Heart left ventricle (tissue), 16 donors: ENCODE measurements at regions of chr6 and their contacts with region 1.

Region 1: DNA sequence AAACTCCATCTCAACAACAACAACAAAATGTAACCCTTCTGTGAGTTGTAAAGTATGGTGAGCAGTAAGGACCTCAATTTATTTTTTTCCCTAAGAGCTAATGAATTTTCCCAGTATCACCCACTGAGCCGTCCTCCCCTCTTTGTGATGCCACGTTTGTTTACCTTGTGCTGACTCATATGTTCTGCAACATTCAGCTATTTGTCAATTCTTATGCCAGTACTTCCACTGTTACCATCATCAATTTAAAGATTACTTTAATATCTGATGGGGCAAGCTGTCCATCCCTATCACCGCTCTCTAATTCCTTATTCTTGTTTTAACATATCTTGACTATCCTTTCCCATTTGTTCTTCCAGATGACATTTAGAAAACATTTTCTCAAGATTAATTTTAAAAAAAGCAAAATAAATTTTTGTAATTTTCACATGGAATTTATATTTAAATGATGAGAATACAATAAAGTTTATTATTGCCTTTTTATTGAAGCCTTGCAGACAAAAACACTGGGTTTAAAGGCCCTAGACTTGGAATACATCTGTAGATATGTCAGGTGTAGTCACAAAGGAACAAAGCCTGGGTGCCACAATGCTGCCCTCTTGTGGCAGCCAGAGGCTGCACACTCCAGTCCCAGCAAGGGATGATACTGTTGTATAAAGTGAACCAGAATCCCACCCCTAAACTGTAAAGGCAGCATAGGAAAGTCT is 37.4 kb downstream of the MAK start:
- DNase-seq: peak; percentile 23 to 64 (median 41)
- ATAC-seq: peak; percentile 55 to 88 (median 80)
- H3K4me3 ChIP-seq: no peak overlapping the region
- H3K27ac ChIP-seq: no peak overlapping the region
- H3K4me1 ChIP-seq: no peaks in the 10 kb centered on the region
- H3K27me3 ChIP-seq: no peaks in the 10 kb centered on the region
- CTCF ChIP-seq: peak; percentile 92 to 99 (median 98)
- POLR2A ChIP-seq: no peak

Region 2: GRCh38 chr6:10478187-10479040 is 322.6 kb before region 1 on chr6:
- intact Hi-C with region 1: loop called (anchors 2 to 5 kb)
- DNase-seq: no peak
- ATAC-seq: no peak
- H3K4me3 ChIP-seq: no peak overlapping the region
- H3K27ac ChIP-seq: no peak overlapping the region
- H3K4me1 ChIP-seq: no peaks in the 10 kb centered on the region
- H3K27me3 ChIP-seq: no peaks in the 10 kb centered on the region
- CTCF ChIP-seq: peak; percentile 41 to 62 (median 58)
- POLR2A ChIP-seq: no peak

Region 3: DNA sequence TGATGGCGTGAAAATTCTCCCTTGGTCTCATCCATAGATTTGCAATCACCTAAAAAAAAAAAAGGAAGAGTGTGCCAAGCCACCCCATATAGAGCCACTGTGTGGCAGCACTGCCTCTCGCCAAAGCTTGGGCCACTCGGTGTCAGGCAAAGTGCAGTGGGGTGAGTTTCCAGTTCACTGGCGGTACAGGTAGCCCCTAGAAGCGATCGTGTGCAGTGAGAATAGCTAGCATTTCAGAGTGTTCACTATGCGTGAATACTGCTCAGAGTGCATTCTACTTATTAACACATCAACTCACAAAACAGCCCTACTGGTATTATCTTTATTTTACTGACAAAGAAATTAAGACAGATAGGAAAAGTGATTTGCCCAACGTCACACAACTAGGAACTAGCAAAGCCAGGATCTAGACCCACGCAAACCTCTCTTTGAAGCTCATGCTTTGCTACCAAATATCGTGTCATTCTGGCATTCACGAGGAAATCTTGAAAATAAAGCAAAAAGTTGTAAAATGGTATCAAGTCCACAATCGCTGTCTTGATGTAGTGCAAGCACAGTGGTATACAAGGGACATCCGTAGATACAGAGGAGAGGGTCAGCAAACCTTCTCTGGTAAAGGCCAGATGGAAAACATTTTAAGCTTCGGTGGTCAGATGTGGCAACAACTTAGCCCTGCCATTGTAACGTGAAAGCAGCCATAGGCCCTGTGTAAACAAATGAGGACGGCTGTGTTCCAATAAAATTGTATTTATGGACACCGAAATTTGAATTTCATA is 290.2 kb before region 1 on chr6:
- intact Hi-C with region 1: loop called in 2 of 10 experiments (anchors 2 to 10 kb)
- DNase-seq: peak; percentile 64 to 81 (median 75)
- ATAC-seq: peak; percentile 91 to 96 (median 92)
- H3K4me3 ChIP-seq: peak overlapping the region in 6 of 12 donors; percentile 7 to 29 (median 14)
- H3K27ac ChIP-seq: peak overlapping the region; percentile 64 to 95 (median 81)
- H3K4me1 ChIP-seq: peaks cover 0 to 16% (median 0%) of the 10 kb centered on the region in 12 donors
- H3K27me3 ChIP-seq: no peaks in the 10 kb centered on the region
- CTCF ChIP-seq: peak; percentile 49 to 75 (median 58)
- POLR2A ChIP-seq: peak in 1 of 2 donors; percentile 6

Region 4: DNA sequence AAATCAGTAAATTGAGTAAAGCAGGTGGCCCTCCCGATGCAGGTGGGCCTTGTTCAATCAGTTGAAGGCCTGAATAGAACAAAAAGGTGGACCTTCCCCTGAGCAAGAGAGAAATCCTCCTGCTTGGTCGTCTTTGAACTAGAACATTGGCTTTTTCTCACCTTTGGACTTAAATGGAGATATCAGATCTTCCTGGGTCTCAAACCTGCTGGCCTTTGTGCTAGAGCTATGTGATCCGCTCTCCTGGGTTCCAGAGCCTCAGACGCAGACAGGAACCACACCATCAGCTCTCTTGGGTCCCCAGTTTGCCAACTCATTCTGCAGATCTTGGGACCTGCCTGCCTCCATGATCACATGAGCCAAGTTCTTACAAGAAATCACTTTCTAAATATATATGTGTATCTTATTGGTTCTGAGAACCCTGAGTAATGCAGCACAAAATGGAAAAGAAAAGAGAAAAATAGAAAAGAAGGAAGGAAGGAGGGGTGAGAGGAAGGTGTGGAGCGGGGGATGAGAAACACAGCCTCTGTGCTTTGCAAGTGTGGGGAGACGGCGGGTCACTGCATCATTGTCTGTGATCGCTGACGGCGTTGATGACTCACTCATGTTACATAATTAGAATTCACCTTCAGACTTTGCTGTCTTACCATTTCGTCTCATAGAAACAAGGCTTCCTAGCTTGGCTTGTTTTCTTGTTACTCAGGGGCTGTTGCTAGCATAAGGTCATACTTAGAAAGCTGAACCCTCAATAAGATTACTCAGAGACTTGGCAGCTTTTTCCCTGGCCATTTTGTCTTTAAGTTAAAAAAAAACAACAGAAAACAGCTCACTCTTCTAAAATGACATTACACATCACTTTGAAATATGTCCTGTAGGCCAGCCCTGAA is 517.1 kb after region 1 on chr6:
- intact Hi-C with region 1: no loop called
- DNase-seq: peak in 4 of 5 donors; percentile 44 to 79 (median 62)
- ATAC-seq: peak; percentile 40 to 88 (median 76)
- H3K4me3 ChIP-seq: no peak overlapping the region
- H3K27ac ChIP-seq: peak overlapping the region in 11 of 12 donors; percentile 10 to 69 (median 61)
- H3K4me1 ChIP-seq: peaks cover 0 to 42% (median 16%) of the 10 kb centered on the region in 12 donors
- H3K27me3 ChIP-seq: no peaks in the 10 kb centered on the region
- CTCF ChIP-seq: no peak
- POLR2A ChIP-seq: no peak